AG04450 (cell line): ENCODE measurements at regions of chr1 and their contacts with region 1.

Region 1: GRCh38 chr1:18597160-18598042 is 33.2 kb upstream of the PAX7 start:
- DNase-seq: no peak
- H3K4me3 ChIP-seq: no peak overlapping the region
- H3K27ac ChIP-seq: no peak overlapping the region
- H3K27me3 ChIP-seq: peaks cover 6% of the 10 kb centered on the region
- CTCF ChIP-seq: peak; percentile 95

Region 2: GRCh38 chr1:18820791-18821641 is 223.6 kb after region 1 on chr1:
- CTCF ChIA-PET with region 1: interaction called, 74 read pairs
- POLR2A ChIA-PET with region 1: no interaction called
- DNase-seq: peak; percentile 36
- H3K4me3 ChIP-seq: no peak overlapping the region
- H3K27ac ChIP-seq: no peak overlapping the region
- H3K27me3 ChIP-seq: no peaks in the 10 kb centered on the region
- CTCF ChIP-seq: peak; percentile 96

Region 3: GRCh38 chr1:18875107-18875795 is 277.9 kb after region 1 on chr1:
- CTCF ChIA-PET with region 1: interaction called, 57 read pairs
- POLR2A ChIA-PET with region 1: no interaction called
- DNase-seq: peak; percentile 61
- H3K4me3 ChIP-seq: no peak overlapping the region
- H3K27ac ChIP-seq: no peak overlapping the region
- H3K27me3 ChIP-seq: no peaks in the 10 kb centered on the region
- CTCF ChIP-seq: peak; percentile 87

Region 4: DNA sequence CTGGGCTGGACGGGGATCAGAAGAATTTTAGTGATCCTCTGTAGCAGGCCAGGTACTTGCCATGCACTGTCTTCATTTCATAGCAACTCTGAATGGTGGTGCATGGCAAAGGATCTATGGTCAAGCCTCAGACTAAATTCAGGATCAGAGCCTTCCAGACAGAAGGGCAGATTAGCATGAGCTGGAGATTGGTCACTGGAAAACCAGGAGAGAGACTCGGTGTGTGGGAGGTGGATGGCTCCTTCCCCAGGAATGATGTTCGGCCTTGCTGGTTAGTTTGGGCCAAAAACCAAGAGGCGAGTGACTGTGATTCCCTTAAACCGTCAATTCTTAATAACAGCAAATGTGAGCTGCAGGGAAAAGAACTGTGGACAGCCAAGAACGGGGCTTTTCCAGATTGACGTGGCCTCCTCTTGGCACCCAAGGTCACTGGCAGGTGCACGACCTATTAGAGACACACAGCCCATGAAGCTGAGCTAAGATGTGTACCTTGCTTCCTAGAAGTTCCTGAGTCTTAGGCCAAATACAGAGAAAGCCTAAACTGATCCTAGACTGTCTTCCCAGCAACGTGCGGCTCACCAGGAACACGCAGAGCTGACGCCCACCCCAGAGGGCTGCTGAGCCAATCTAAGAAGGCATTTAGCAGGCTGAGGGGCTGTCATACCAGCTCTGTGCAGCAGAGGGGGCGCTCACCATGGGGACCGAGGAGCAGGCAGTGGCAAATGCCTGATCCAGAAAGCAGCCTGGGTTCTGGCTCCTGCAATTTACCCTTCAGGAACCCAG is 286.4 kb after region 1 on chr1:
- CTCF ChIA-PET with region 1: interaction called, 14 read pairs
- POLR2A ChIA-PET with region 1: no interaction called
- DNase-seq: peak; percentile 33
- H3K4me3 ChIP-seq: no peak overlapping the region
- H3K27ac ChIP-seq: no peak overlapping the region
- H3K27me3 ChIP-seq: no peaks in the 10 kb centered on the region
- CTCF ChIP-seq: peak; percentile 94